Activated naive CD4-positive, alpha-beta T cell treated with anti-CD3 and anti-CD28 coated beads for 36 hours (primary cell): ENCODE measurements at regions of chr11 and their contacts with region 1.

Region 1: DNA sequence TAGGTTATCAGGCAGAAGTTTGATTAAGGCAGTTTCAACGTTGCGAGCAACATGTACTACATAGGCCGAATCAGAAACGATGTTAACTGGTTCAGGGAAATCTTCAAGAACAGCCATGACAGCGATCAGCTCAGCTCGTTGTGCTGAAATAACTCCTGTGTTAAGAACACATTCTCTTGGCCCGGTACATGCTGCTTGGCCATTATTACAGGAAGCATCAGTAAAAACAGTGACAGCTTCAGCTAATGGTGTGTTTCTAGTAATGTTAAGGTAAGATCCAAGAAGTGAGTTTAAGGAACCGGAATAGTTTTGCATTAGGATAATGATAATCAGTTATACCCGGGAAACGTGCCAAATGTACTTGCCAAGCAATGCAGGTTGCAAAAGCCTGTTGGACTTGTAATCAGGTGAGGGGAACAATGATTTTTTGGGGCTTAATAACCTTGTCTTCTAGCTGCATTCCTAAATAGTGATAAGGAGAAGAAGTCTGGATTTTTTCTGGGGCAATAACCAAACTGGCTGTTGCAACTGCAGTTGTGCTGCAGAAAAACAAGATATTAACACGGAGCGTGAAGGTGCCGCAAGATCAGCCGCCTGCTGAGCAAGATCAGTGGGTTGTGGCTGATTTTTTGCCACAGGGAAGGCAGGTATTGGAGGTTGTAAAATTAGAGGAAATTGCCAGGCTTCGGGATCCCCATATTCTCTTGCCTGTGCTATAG is 14.3 kb downstream of the OR52K1 start:
- DNase-seq: no peak
- H3K4me3 Mint-ChIP-seq: no peak overlapping the region
- H3K27ac Mint-ChIP-seq: no peak overlapping the region
- H3K4me1 Mint-ChIP-seq: peaks cover 3% of the 10 kb centered on the region
- H3K27me3 Mint-ChIP-seq: peaks cover 6% of the 10 kb centered on the region

Region 2: GRCh38 chr11:4393209-4393857 is 103.4 kb before region 1 on chr11 and contains the start of gene TRIM21:
- CTCF ChIA-PET with region 1: no interaction called
- intact Hi-C with region 1: loop called (anchors 1 kb)
- DNase-seq: peak; percentile 96
- H3K4me3 Mint-ChIP-seq: peak within 1 kb of the TSS; percentile 86
- H3K27ac Mint-ChIP-seq: peak within 1 kb of the TSS; percentile 88
- H3K4me1 Mint-ChIP-seq: peaks cover 34% of the 10 kb centered on the region
- H3K27me3 Mint-ChIP-seq: peaks cover 8% of the 10 kb centered on the region
- total RNA-seq, gene TRIM21: 23.5 to 26.0 TPM

Region 3: DNA sequence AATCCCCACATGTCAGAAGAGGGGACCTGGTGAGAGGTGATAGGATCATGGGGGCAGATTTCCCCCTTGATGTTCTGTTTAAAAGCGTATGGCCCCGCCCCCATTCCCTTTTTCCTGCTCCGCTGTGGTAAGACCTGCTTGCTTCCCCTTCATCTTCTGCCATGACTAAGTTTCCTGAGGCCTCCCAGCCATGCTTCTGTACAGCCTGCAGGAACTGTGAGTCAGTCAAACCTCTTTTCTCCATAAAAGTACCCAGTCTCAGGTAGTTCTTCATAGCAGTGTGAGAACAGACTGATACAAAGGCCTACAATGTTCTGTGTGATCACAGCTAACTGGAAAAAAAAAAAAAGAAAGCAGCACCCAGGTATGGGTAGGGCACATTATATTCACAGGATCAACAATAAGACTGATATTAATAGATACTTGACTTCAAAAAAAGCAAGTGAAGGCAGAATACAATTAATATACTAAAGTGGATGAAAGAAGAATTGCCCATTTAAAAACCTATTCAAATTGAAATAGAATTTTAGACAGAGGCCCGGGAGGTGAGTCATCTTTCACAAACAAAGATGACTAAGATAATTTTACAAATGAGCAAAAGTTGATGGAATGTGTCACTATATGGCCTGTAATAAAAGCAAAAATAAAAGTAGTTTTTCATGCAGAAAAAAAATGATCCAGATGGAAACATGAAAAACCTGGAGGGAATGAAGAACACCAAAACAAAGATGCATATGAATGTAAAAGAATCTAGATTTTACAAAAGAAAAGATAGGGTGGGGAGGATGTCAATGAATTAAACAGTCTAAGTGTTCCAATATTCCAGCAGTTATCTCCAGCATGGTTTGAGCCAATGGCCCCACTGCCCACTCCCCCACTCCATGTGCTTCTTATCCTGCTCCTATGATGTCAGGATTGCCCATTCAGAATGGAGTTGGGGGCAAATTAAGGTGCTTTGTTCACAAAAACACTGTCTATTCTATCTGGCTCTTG is 15.8 kb before region 1 on chr11:
- CTCF ChIA-PET with region 1: no interaction called
- intact Hi-C with region 1: loop called (anchors 1 kb)
- DNase-seq: peak; percentile 33
- H3K4me3 Mint-ChIP-seq: no peak overlapping the region
- H3K27ac Mint-ChIP-seq: peak overlapping the region; percentile 2
- H3K4me1 Mint-ChIP-seq: peaks cover 15% of the 10 kb centered on the region
- H3K27me3 Mint-ChIP-seq: no peaks in the 10 kb centered on the region

Region 4: DNA sequence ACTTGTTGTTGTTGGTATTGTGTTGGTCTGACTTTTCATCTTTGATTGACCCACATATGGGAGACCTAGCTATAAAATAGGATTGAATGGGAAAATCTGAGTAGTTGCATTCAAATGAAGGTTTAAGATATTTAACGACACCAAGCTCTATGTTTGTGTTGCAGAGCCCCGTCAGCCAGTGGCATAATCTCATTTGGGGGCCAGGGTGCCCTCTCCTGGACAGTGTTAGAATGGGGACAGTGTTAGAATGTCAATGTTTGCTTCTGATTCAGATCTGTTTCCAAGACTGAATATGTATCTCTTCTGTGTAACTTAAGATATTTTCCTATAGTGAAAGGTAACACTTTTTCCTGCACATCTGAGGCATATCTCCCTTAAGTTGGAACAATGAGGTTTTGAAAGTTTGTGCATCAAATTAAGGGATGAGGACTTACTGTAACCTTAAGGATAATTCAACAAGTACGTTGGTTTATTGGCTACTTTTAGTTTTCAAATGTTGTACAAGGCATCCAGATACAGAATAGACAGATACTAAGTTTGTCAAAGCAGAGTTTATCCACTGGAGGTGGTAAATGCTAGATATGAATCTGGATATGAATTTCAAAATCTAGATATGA is 43.0 kb after region 1 on chr11:
- CTCF ChIA-PET with region 1: interaction called, 4 read pairs
- intact Hi-C with region 1: loop called (anchors 2 kb)
- DNase-seq: peak; percentile 79
- H3K4me3 Mint-ChIP-seq: no peak overlapping the region
- H3K27ac Mint-ChIP-seq: no peak overlapping the region
- H3K4me1 Mint-ChIP-seq: no peaks in the 10 kb centered on the region
- H3K27me3 Mint-ChIP-seq: no peaks in the 10 kb centered on the region

Region 5: DNA sequence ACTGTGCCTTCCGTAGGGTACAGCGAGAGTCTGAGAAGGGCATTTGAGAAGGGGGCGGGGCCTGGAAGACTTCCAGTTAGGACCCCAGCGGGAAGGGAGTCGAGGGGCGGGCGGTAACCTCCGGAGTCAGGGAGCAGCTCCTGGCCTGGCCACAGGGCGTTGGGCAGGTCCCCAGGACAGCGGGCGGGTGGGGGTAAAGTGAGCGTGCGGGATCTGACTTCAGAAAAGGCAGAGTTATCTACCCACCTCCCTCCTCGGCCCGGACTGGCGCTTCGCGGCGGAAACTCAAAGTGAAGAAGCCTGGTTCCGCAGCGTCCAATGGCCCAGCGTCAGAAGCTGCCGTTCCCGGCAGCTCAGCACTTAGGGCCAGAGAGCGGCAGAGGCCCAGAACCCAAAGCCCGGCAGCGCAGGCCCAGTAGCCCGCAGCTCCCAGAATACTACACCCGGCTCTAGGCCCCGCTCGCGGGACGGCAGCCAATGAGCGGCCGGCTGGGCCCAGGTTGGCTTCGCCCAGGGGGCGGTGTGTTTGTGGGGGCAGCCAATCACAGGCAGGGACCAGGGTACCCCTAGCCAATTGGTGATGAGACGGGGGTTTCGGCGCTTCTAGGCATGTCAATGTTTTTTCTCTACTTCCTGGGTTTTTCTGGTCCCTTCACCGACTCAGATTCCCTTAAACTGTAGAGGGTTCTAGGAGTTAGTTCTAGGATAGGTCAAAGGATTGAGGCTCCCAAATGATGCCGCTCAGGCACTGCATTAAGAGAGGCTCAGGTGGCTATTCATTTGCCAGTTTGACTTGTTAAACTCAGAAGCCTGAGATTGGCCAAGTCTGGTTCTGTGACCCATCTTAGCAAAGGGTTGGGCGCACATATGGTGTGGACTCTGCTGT is 111.3 kb after region 1 on chr11 and contains the start of gene TRIM68:
- CTCF ChIA-PET with region 1: no interaction called
- intact Hi-C with region 1: loop called (anchors 2 kb)
- DNase-seq: peak; percentile 97
- H3K4me3 Mint-ChIP-seq: peak within 1 kb of the TSS; percentile 94
- H3K27ac Mint-ChIP-seq: peak within 1 kb of the TSS; percentile 88
- H3K4me1 Mint-ChIP-seq: peaks cover 45% of the 10 kb centered on the region
- H3K27me3 Mint-ChIP-seq: no peaks in the 10 kb centered on the region
- total RNA-seq, gene TRIM68: 11.3 to 15.4 TPM